SK-N-SH (cell line): ENCODE measurements at regions of chr2 and their contacts with region 1.

Region 1: GRCh38 chr2:240566203-240567136 is 1.8 kb upstream of the RNPEPL1 start:
- DNase-seq: peak; percentile 92
- H3K4me3 ChIP-seq: peak overlapping the region; percentile 70 to 73
- H3K27ac ChIP-seq: peak overlapping the region; percentile 74 to 80
- H3K4me1 ChIP-seq: peaks cover 36 to 42% of the 10 kb centered on the region in 2 experiments
- H3K27me3 ChIP-seq: no peaks in the 10 kb centered on the region
- CTCF ChIP-seq: peak; percentile 72
- EP300 ChIP-seq: no peak
- RAD21 ChIP-seq: peak; percentile 19

Region 2: GRCh38 chr2:240426797-240427721 is 139.4 kb before region 1 on chr2:
- CTCF ChIA-PET with region 1: no interaction called
- POLR2A ChIA-PET with region 1: no interaction called
- DNase-seq: no peak
- H3K4me3 ChIP-seq: no peak overlapping the region
- H3K27ac ChIP-seq: no peak overlapping the region
- H3K4me1 ChIP-seq: no peaks in the 10 kb centered on the region
- H3K27me3 ChIP-seq: peaks cover 6% of the 10 kb centered on the region
- CTCF ChIP-seq: no peak
- EP300 ChIP-seq: no peak
- RAD21 ChIP-seq: no peak

Region 3: DNA sequence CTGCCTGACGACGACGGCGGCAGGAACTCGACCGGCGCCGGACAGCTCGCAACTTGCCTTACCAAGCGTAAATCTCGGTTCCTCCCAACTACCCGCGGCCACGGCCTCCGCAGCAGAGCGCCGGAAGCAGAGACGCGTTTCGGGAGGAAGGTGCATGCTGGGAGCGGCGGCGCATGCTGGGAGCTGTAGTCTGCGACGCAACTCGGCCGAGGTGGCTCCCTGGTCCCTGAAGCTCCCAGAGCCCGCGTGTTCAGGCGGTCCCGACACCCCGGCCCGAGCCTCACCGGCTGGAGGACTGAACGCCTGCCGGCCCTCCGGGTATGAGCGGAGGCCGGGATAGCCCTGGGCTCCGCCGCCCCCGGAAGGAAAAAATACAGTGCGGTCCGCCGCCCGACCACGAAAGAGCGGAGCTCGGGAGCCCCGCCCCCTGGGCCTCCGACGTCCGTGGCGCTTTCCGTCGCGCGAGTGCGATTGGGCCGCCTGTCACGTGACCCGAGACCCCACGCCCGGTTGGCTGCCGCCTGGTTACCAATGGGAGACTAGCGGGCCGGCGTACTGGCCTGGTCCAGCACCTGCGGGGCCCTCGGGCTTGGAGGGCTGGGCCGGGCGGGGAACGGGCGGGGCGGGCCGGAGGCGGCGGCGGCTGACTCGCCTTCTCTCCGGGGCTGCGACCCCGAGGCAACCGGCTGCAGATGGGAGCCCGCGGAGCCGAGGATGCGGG is 19.9 kb after region 1 on chr2 and contains the start of gene CAPN10:
- CTCF ChIA-PET with region 1: interaction called, 31 read pairs
- POLR2A ChIA-PET with region 1: interaction called, 25 read pairs
- DNase-seq: peak; percentile 99
- H3K4me3 ChIP-seq: peak within 1 kb of the TSS; percentile 96 to 100
- H3K27ac ChIP-seq: peak within 1 kb of the TSS; percentile 82 to 94
- H3K4me1 ChIP-seq: peaks cover 17 to 28% of the 10 kb centered on the region in 2 experiments; a peak in 3 of 4 replicates
- H3K27me3 ChIP-seq: no peaks in the 10 kb centered on the region
- CTCF ChIP-seq: no peak
- EP300 ChIP-seq: no peak
- RAD21 ChIP-seq: no peak
- polyA plus RNA-seq, gene CAPN10: 24.0 and 28.1 TPM in 2 replicates

Region 4: GRCh38 chr2:240604291-240604938 is 37.9 kb after region 1 on chr2:
- CTCF ChIA-PET with region 1: interaction called, 15 read pairs
- POLR2A ChIA-PET with region 1: no interaction called
- DNase-seq: peak; percentile 99
- H3K4me3 ChIP-seq: no peak overlapping the region
- H3K27ac ChIP-seq: peak overlapping the region in 1 of 2 experiments; percentile 83; a peak in 2 of 4 replicates
- H3K4me1 ChIP-seq: peaks cover 0 to 15% of the 10 kb centered on the region in 2 experiments; a peak in 1 of 4 replicates
- H3K27me3 ChIP-seq: no peaks in the 10 kb centered on the region
- CTCF ChIP-seq: peak; percentile 48
- EP300 ChIP-seq: peak in 1 of 2 experiments; percentile 14; a peak in 1 of 4 replicates
- RAD21 ChIP-seq: peak; percentile 69

Region 5: GRCh38 chr2:240707821-240708220 is 141.4 kb after region 1 on chr2:
- CTCF ChIA-PET with region 1: interaction called, 10 read pairs
- POLR2A ChIA-PET with region 1: no interaction called
- DNase-seq: no peak
- H3K4me3 ChIP-seq: no peak overlapping the region
- H3K27ac ChIP-seq: no peak overlapping the region
- H3K4me1 ChIP-seq: no peaks in the 10 kb centered on the region; a peak in 1 of 4 replicates
- H3K27me3 ChIP-seq: peaks cover 9% of the 10 kb centered on the region; the same call in 1 of the 2 replicates
- CTCF ChIP-seq: no peak
- EP300 ChIP-seq: no peak
- RAD21 ChIP-seq: no peak